BJ (cell line): ENCODE measurements at regions of chr15 and their contacts with region 1.

Region 1: GRCh38 chr15:100879464-100880138 is at the start of gene ALDH1A3:
- DNase-seq: no peak
- H3K4me3 ChIP-seq: peak within 1 kb of the TSS; percentile 40
- H3K27me3 ChIP-seq: peaks cover 26% of the 10 kb centered on the region
- CTCF ChIP-seq: no peak
- polyA plus RNA-seq, gene ALDH1A3: 1.1 TPM in 2 replicates

Region 2: DNA sequence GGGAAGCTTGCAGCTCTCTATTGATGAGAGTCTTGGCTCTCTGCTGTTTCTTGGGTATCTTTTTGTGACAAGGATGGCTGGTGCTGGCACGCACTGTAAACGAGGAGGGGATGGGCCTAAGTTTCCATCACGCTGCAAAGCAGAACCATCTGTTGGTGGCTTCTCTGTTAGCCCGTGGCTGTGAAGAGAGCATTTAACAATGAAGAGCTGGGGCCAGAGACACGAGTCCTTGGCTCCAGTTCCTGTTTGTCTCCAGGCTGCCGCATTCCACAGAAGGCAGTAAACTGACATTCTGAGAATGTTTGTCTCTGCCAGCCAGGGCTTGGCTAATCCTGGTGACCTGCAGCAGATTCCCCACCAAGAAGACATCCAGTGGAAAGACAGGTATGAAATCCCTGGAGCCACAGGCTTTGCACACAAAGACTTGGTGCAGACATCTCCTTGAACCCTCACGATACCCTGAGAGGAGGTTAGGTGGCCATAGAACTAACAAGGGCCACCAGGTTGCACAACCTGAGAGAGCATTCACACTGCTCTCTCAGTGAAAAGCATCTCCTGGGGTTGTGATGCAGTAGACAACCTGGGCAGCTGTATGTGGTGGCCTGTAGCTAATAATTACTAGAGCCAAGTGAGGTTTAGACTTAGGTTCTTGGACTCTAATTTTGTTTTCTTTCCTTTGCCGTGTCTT is 146.4 kb before region 1 on chr15:
- CTCF ChIA-PET with region 1: no interaction called
- POLR2A ChIA-PET with region 1: interaction called, 10 read pairs
- DNase-seq: peak; percentile 84
- H3K4me3 ChIP-seq: no peak overlapping the region
- H3K27me3 ChIP-seq: no peaks in the 10 kb centered on the region
- CTCF ChIP-seq: no peak